ENCODE measurements at regions of chr9 and their contacts with region 1.

Region 1: GRCh38 chr9:127525401-127526187 is 74.3 kb downstream of the LRSAM1 start:
- DNase-seq: no peak
- H3K4me3 ChIP-seq: no peak overlapping the region
- CTCF ChIP-seq: peak; percentile 62

Region 2: GRCh38 chr9:127437497-127438264 is 87.9 kb before region 1 on chr9:
- CTCF ChIA-PET with region 1: no interaction called
- POLR2A ChIA-PET with region 1: no interaction called
- DNase-seq: no peak
- H3K4me3 ChIP-seq: no peak overlapping the region
- CTCF ChIP-seq: peak; percentile 6

Region 3: DNA sequence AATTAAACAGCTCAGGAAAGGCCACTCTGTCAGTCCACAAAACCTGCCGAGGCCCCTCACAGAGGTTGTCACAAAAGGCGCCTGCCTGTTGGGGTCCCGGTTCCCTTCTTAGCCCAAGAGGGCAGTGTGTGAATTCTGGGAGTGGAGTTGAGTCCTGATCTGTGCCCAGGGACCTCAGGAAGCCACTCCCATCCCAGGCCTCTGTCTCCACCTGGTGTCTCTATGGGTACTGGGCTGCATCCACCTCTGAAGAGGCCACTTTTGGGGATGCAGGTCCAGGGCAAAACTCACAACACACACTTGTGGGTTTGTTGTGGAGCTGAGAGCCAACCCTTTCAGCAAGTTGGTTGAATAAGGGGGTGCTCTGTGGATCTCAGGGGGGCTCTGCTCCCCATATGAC is 12.2 kb after region 1 on chr9:
- CTCF ChIA-PET with region 1: interaction called, 89 read pairs
- POLR2A ChIA-PET with region 1: interaction called, 5 read pairs
- DNase-seq: no peak
- H3K4me3 ChIP-seq: no peak overlapping the region
- CTCF ChIP-seq: peak; percentile 25

Region 4: DNA sequence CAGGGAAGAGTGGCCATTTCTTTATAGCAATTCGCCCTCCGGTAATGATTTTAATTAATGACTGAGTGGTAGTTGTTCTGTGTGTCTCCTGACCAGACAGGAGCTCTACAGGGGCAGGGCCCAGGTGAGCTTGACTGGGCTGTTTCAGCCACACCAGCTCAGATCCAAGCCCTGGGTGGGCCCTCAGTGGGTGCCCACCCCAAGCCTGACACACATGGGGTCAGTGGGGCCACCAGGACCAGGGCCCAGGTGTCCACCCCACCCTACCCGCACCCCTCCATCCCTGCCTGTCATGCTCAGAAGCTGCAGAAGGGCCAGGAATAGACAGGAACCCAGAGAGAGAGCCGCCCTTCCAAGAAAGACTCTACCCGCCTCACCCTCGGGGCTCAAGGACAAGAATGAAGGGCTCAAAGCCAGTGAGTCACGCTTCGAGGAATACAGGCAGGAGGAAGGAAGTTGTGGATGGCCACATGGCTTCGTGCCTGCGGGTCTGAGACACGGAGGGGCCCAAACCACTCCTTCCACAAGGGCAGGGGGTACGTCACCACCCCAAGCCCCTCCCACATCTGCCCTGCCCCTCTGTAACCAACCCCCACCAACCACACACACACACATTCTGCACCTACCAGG is 30.3 kb after region 1 on chr9:
- CTCF ChIA-PET with region 1: interaction called, 11 read pairs
- POLR2A ChIA-PET with region 1: interaction called, 6 read pairs
- DNase-seq: peak; percentile 73
- H3K4me3 ChIP-seq: peak overlapping the region; percentile 12; the same call in 1 of the 2 replicates
- CTCF ChIP-seq: no peak

Region 5: DNA sequence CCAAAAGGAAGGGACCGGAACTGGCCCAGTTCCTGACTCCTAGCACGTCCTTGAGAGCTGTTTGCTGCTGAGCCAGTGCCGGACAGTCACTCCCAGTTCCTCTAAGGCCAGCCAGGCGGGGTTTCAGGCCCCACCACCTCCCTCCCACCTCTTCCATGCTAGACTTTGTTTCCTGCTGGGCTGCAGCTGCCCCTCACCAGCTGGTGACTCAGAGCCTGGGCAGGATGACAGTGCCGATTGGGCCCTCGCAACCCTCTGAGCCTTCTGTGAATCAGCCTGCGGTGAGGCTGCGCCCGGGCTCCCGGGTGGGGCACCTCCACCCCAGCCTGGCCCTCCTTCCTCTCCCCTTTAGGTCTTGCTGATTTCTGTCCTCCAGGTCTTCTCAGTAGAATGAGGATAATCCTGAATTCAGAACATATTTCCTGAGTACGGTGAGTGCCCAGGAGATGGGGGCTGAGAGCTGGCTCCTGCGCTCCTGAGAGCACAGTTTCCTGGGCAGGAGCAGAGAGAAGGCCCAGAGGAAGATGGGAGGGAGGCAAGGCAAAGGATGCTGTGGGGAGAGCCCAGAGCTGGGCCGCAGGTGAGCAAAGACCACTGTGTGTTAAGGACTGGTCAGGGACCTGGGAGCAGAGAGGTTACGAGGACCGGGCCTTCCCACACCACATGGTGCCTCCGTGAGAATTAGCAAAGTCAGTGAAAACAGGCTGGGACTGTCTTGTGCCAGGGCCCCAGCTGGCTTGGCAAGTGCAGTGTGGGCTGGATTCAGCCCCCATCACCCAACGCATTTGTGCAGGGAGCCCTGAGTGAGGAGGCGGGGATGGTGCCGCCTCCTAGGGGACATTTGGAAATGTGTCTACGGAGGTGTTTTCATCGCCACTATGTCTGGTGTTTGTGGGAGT is 53.6 kb after region 1 on chr9:
- CTCF ChIA-PET with region 1: interaction called, 57 read pairs
- POLR2A ChIA-PET with region 1: interaction called, 6 read pairs
- DNase-seq: peak; percentile 84
- H3K4me3 ChIP-seq: peak overlapping the region; percentile 57
- CTCF ChIP-seq: peak; percentile 36